Vagina (tissue), 2 donors: ENCODE measurements at regions of chr1 and their contacts with region 1.

Region 1: GRCh38 chr1:202710070-202711045 is at the start of gene SYT2:
- DNase-seq: no peak
- H3K4me3 ChIP-seq: peak within 1 kb of the TSS; percentile 25 to 27
- H3K27ac ChIP-seq: no peak within 1 kb of the TSS
- H3K4me1 ChIP-seq: peaks cover 18% of the 10 kb centered on the region
- H3K27me3 ChIP-seq: peaks cover 7% of the 10 kb centered on the region
- CTCF ChIP-seq: no peak
- POLR2A ChIP-seq: no peak
- total RNA-seq, gene SYT2: not detected

Region 2: GRCh38 chr1:202184750-202185460 is 525.5 kb before region 1 on chr1:
- intact Hi-C with region 1: loop called (anchors 10 kb)
- DNase-seq: no peak
- H3K4me3 ChIP-seq: no peak overlapping the region
- H3K27ac ChIP-seq: no peak overlapping the region
- H3K4me1 ChIP-seq: peaks cover 5% of the 10 kb centered on the region
- H3K27me3 ChIP-seq: no peaks in the 10 kb centered on the region
- CTCF ChIP-seq: peak; percentile 36 to 75 (median 55)
- POLR2A ChIP-seq: no peak

Region 3: GRCh38 chr1:202329891-202330290 is 380.5 kb before region 1 on chr1:
- intact Hi-C with region 1: loop called (anchors 10 kb)
- DNase-seq: no peak
- H3K4me3 ChIP-seq: no peak overlapping the region
- H3K27ac ChIP-seq: no peak overlapping the region
- H3K4me1 ChIP-seq: no peaks in the 10 kb centered on the region
- H3K27me3 ChIP-seq: no peaks in the 10 kb centered on the region
- CTCF ChIP-seq: no peak
- POLR2A ChIP-seq: no peak

Region 4: GRCh38 chr1:202599677-202600431 is 110.5 kb before region 1 on chr1:
- intact Hi-C with region 1: no loop called
- DNase-seq: no peak
- H3K4me3 ChIP-seq: no peak overlapping the region
- H3K27ac ChIP-seq: no peak overlapping the region
- H3K4me1 ChIP-seq: no peaks in the 10 kb centered on the region
- H3K27me3 ChIP-seq: no peaks in the 10 kb centered on the region
- CTCF ChIP-seq: peak in 2 of 3 experiments; percentile 39 to 71
- POLR2A ChIP-seq: no peak

Region 5: GRCh38 chr1:202725541-202725940 is 15.2 kb after region 1 on chr1:
- intact Hi-C with region 1: loop called (anchors 2 kb)
- DNase-seq: no peak
- H3K4me3 ChIP-seq: no peak overlapping the region
- H3K27ac ChIP-seq: no peak overlapping the region
- H3K4me1 ChIP-seq: no peaks in the 10 kb centered on the region
- H3K27me3 ChIP-seq: no peaks in the 10 kb centered on the region
- CTCF ChIP-seq: no peak
- POLR2A ChIP-seq: no peak